ENCODE measurements at regions of chr12 and their contacts with region 1.

Region 1: DNA sequence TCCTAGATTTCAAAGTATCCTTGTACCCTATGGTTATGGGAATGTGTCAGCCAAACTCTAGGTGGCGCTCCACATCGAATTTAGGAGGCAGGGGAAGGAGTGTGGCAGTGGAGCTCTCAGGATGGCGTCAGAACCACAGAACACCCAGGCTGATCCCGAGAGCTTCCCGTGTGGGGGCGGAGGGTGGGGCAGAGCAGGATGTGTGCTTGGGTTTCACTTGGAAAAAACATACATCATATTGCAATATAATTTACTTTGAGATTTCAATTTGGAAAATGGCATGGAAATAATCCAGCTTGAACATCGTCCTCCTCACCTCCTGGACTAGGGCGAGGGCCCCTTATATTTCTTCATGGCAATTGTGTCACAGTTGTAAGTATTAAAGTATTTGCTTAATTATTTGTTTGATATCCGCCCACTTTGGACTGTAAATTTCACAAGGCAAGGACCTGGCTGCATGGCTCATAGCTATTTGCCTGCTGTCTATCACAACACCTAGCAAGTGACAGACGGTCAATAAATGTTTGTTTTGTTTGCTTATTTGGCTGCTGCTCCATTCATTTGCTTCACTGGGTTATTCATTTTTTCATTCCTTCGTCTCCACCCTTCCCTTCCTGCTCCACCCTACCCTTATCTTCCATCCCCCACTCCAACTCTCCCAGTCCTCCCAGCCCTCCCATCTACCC is 221.5 kb upstream of the HMGA2 start:
- DNase-seq: no peak
- H3K4me3 ChIP-seq: peak overlapping the region; percentile 41
- H3K27me3 ChIP-seq: no peaks in the 10 kb centered on the region
- CTCF ChIP-seq: peak; percentile 78

Region 2: GRCh38 chr12:65287426-65287825 is 315.3 kb before region 1 on chr12:
- CTCF ChIA-PET with region 1: no interaction called
- POLR2A ChIA-PET with region 1: interaction called, 21 read pairs
- DNase-seq: no peak
- H3K4me3 ChIP-seq: no peak overlapping the region
- H3K27me3 ChIP-seq: no peaks in the 10 kb centered on the region
- CTCF ChIP-seq: no peak

Region 3: DNA sequence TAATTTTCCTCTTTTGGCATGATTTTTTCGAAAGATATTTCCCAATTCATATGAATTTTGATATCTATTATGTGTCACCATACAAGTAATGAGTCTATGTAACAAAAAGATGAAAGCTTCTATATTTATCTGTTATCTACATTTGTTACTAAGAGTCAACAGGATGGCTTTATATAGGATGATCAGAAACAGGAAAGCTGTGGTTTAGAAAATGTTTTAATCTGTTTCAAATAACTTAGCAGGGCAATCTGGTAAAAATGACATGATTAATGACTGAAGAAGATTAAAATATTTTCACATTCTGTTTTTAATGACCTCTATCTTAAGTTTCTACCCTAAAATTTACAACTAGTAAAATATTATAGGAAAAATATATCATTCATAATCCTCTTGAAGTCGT is 218.5 kb before region 1 on chr12:
- CTCF ChIA-PET with region 1: no interaction called
- POLR2A ChIA-PET with region 1: no interaction called
- DNase-seq: no peak
- H3K4me3 ChIP-seq: no peak overlapping the region
- H3K27me3 ChIP-seq: no peaks in the 10 kb centered on the region
- CTCF ChIP-seq: no peak

Region 4: DNA sequence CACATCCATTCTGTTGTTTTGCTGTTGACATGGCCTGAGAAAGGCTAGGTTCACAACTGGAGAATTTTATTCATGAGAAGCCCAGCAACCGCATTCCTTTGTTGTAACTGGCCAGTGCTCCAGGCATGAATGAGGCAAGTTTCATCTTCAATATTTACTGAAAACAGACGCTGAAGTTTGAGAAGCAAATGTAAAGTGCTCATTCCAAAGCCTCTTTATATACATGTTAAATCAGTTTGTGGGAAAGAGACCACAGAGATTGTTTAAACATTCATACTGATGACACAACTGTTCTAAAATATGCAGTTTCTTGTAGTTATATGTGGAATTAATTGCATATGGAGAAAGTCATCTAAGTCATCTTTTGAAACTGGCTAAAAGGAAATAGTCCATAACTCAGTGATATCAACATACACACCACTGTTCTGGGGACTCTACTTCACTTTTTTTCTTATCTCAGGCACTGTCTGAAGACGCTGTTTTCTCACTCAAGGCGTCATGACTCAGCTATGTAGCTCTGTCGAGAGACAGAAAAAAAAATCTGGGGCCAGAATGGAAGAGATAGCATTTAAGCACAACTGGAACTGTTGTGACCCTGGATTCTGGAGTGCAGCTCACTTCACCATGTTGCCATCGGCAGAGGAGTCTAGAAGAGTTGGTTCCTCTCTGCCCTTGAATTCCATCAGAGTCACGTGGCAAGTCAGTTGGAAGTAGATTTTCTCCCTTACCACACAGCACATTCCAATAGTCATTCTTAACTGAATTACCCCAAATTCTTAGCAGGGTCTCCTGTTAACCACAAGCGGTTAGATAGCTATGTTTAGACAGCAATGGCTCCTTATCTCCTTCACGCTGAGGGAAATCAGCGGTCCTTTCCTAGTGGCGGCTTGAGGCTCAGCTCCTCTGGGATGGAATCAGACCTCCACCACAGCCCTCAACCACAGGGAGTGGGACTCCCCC is 36.9 kb before region 1 on chr12:
- CTCF ChIA-PET with region 1: interaction called, 10 read pairs
- POLR2A ChIA-PET with region 1: interaction called, 3 read pairs
- DNase-seq: peak; percentile 98
- H3K4me3 ChIP-seq: peak overlapping the region; percentile 5; the same call in 1 of the 2 replicates
- H3K27me3 ChIP-seq: no peaks in the 10 kb centered on the region
- CTCF ChIP-seq: peak; percentile 23; the same call in 1 of the 2 replicates

Region 5: DNA sequence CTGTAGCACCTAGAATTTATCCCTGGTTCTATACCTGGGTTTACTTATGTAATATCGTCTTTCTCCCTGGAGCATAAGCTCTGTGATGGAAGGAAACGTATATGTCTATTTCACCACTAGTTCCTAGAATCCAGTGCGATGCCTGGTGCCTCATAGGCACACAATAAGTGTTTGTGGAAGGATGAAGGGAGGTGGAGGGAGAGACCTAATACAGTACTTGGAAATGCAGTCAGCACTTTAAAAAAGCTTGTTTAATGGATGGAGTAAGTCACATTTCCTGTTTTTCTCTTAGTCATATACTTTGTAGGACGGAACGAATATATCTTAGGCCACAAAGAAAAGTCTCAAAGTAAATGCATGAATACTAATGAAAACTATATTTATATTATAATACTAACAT is 35.0 kb after region 1 on chr12:
- CTCF ChIA-PET with region 1: no interaction called
- POLR2A ChIA-PET with region 1: no interaction called
- DNase-seq: no peak
- H3K4me3 ChIP-seq: no peak overlapping the region
- H3K27me3 ChIP-seq: no peaks in the 10 kb centered on the region
- CTCF ChIP-seq: no peak

Region 6: DNA sequence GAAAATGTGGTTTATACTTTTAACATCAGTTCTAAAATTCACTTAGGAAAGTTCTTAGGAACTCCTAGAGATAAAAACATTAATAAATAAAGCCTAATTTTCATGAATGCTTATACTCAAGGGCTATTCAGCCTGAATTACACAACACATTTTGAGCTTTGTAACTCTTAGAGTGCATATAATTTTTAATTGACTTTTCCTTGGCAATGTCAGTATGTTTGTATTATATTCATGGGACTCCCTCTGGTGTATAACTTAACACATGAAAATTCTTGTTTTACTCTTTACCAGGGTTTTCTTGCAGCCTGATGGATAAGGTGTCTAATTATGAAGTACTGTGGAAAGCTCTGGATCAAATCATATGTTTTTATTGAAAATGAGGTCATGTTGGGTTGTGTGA is 71.0 kb after region 1 on chr12:
- CTCF ChIA-PET with region 1: interaction called, 20 read pairs
- POLR2A ChIA-PET with region 1: no interaction called
- DNase-seq: no peak
- H3K4me3 ChIP-seq: no peak overlapping the region
- H3K27me3 ChIP-seq: no peaks in the 10 kb centered on the region
- CTCF ChIP-seq: 0 out of 2 replicates have a peak, but pooled peaks have one; percentile 9